Activated CD4-positive, alpha-beta T cell treated with anti-CD3 and anti-CD28 coated beads, Interleukin-2, amount 10 ng/mL, durations not matched to agents 24 days and 14 days (primary cell): ENCODE measurements at regions of chr14 and their contacts with region 1.

Region 1: DNA sequence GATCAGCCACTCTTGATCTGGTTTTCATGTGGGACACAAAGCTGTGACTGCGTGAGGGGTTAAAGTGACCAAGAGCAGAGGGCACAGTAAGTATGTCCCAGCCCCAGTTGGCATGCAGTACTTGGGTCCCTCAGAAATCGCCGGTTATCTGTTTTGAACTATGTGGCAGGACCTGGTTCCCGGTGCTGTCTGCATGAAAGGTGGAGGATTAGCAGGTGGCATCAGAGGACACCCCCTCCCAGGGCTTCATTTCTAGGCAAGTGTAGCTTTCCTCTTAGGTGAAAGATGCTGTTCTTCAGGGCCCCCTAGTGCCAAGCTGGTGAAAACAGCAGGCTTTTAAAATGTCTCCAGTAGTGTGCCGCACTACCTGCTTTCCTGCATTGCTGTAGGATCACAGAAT is 57.1 kb downstream of the ATG14 start:
- DNase-seq: peak; percentile 89
- H3K4me3 Mint-ChIP-seq: peak overlapping the region; percentile 70
- H3K27ac Mint-ChIP-seq: peak overlapping the region; percentile 93
- H3K4me1 Mint-ChIP-seq: peaks cover 33% of the 10 kb centered on the region
- H3K27me3 Mint-ChIP-seq: no peaks in the 10 kb centered on the region

Region 2: DNA sequence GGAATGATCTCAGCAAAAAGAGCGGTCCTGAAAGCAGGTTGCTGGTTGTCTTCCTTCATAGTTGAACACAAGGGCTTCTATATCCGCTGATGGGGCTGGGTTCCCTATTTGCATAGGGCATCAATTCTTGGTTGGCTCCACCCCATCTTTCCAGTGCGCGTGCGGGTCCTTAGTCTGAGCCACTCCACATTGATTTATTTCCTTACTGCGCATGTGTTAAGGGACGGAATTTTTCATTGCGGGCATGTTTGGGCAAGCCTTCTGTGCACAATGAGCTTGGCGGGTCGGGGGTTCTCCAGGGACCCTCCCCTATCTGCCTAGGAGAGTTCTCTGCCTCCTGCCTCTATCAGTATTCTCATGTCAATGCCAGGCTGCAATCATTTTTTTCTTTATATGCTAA is 141.9 kb before region 1 on chr14:
- intact Hi-C with region 1: loop called (anchors 1 kb)
- DNase-seq: no peak
- H3K4me3 Mint-ChIP-seq: no peak overlapping the region
- H3K27ac Mint-ChIP-seq: no peak overlapping the region
- H3K4me1 Mint-ChIP-seq: peaks cover 2% of the 10 kb centered on the region
- H3K27me3 Mint-ChIP-seq: peaks cover 3% of the 10 kb centered on the region